A549 (cell line): ENCODE measurements at regions of chr1 and their contacts with region 1.

Region 1: GRCh38 chr1:6343506-6344405 is 49.8 kb downstream of the ACOT7 start:
- DNase-seq: peak; percentile 66 to 89
- ATAC-seq: peak; percentile 86 to 93
- H3K4me3 ChIP-seq: no peak overlapping the region
- H3K27ac ChIP-seq: peak overlapping the region; percentile 43 to 77; a peak in 5 of 6 replicates
- H3K4me1 ChIP-seq: peaks cover 19% of the 10 kb centered on the region
- CTCF ChIP-seq: peak; percentile 75
- EP300 ChIP-seq: no peak
- POLR2A ChIP-seq: no peak
- RAD21 ChIP-seq: peak; percentile 83 to 86

Region 2: GRCh38 chr1:6099787-6100765 is 243.7 kb before region 1 on chr1:
- CTCF ChIA-PET with region 1: no interaction called
- POLR2A ChIA-PET with region 1: no interaction called
- DNase-seq: peak in 1 of 2 experiments; percentile 22
- ATAC-seq: peak; percentile 36 to 73; a peak in 3 of 6 replicates
- H3K4me3 ChIP-seq: no peak overlapping the region
- H3K27ac ChIP-seq: no peak overlapping the region
- H3K4me1 ChIP-seq: no peaks in the 10 kb centered on the region
- CTCF ChIP-seq: no peak
- EP300 ChIP-seq: no peak
- POLR2A ChIP-seq: no peak
- RAD21 ChIP-seq: peak in 1 of 2 experiments; percentile 25; a peak in 1 of 5 replicates

Region 3: GRCh38 chr1:6235296-6235677 is 108.5 kb before region 1 on chr1:
- CTCF ChIA-PET with region 1: interaction called, 11 read pairs
- POLR2A ChIA-PET with region 1: no interaction called
- DNase-seq: no peak
- ATAC-seq: no peak
- H3K4me3 ChIP-seq: peak overlapping the region; percentile 100
- H3K27ac ChIP-seq: peak overlapping the region; percentile 99
- H3K4me1 ChIP-seq: peaks cover 7% of the 10 kb centered on the region; the same call in 1 of the 3 replicates
- CTCF ChIP-seq: no peak
- EP300 ChIP-seq: no peak
- POLR2A ChIP-seq: no peak
- RAD21 ChIP-seq: no peak

Region 4: DNA sequence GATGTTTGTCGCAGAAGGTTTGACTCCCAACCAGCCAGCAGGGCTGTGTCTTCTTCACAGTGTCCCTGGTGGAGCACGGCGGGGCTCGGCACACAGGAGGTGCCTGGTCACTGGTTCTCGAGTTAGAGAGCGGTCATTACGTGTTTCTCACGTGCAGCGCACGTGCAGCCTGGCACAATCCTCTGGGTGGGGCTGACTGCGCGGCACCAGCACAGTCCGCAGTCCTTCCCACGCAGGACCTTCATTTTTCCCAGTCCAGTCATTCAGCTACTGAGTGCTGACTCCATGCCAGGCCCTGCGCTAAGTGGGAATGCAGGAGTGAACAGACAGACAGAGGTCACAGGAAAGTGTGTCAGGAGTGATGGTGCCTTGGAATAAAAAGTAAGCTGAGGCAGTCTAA is 36.7 kb before region 1 on chr1:
- CTCF ChIA-PET with region 1: no interaction called
- POLR2A ChIA-PET with region 1: no interaction called
- DNase-seq: no peak
- ATAC-seq: no peak
- H3K4me3 ChIP-seq: no peak overlapping the region
- H3K27ac ChIP-seq: no peak overlapping the region
- H3K4me1 ChIP-seq: no peaks in the 10 kb centered on the region
- CTCF ChIP-seq: no peak
- EP300 ChIP-seq: no peak
- POLR2A ChIP-seq: no peak
- RAD21 ChIP-seq: no peak

Region 5: GRCh38 chr1:6367381-6368012 is 23.7 kb after region 1 on chr1:
- CTCF ChIA-PET with region 1: interaction called, 70 read pairs
- POLR2A ChIA-PET with region 1: no interaction called
- DNase-seq: no peak
- ATAC-seq: peak in 1 of 2 experiments; percentile 40; a peak in 3 of 6 replicates
- H3K4me3 ChIP-seq: no peak overlapping the region
- H3K27ac ChIP-seq: 0 out of 6 replicates have a peak overlapping the region, but pooled peaks of 1 of the 2 experiments have one; percentile 21
- H3K4me1 ChIP-seq: no peaks in the 10 kb centered on the region; the same call in 2 of the 3 replicates
- CTCF ChIP-seq: no peak
- EP300 ChIP-seq: no peak
- POLR2A ChIP-seq: no peak
- RAD21 ChIP-seq: no peak

Region 6: DNA sequence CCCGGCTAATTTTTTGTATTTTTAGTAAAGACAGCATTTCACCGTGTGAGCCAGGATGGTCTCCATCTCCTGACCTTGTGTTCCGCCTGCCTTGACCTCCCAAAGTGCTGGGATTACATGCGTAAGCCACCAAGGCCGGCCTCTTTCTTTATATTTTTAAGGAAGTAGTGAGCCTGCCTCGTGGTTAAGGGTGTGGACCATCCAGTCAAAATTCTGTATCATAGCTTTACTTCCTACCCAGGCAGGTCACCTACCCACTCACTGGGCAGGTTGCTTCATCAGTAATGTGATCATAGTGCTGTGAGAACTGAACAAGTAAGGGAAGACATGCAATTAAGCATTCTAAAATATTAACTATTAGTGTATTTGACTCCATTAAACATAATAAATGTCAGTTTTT is 57.9 kb after region 1 on chr1:
- CTCF ChIA-PET with region 1: interaction called, 48 read pairs
- POLR2A ChIA-PET with region 1: no interaction called
- DNase-seq: no peak
- ATAC-seq: no peak
- H3K4me3 ChIP-seq: no peak overlapping the region
- H3K27ac ChIP-seq: no peak overlapping the region
- H3K4me1 ChIP-seq: no peaks in the 10 kb centered on the region
- CTCF ChIP-seq: no peak
- EP300 ChIP-seq: no peak
- POLR2A ChIP-seq: no peak
- RAD21 ChIP-seq: no peak

Region 7: GRCh38 chr1:6414443-6414844 is 70.7 kb after region 1 on chr1:
- CTCF ChIA-PET with region 1: interaction called, 48 read pairs
- POLR2A ChIA-PET with region 1: no interaction called
- DNase-seq: peak; percentile 53 to 59
- ATAC-seq: peak; percentile 77 to 80
- H3K4me3 ChIP-seq: no peak overlapping the region
- H3K27ac ChIP-seq: peak overlapping the region; percentile 72 to 82
- H3K4me1 ChIP-seq: peaks cover 42% of the 10 kb centered on the region
- CTCF ChIP-seq: peak; percentile 40
- EP300 ChIP-seq: no peak
- POLR2A ChIP-seq: no peak
- RAD21 ChIP-seq: no peak